A673 (cell line): ENCODE measurements at regions of chr4 and their contacts with region 1.

Region 1: GRCh38 chr4:4328840-4329239 is 38.8 kb downstream of the ZBTB49 start:
- DNase-seq: no peak
- H3K4me3 ChIP-seq: no peak overlapping the region
- H3K27ac ChIP-seq: no peak overlapping the region
- H3K4me1 ChIP-seq: no peaks in the 10 kb centered on the region
- H3K27me3 ChIP-seq: no peaks in the 10 kb centered on the region
- CTCF ChIP-seq: no peak

Region 2: GRCh38 chr4:4541661-4542570 is 213.1 kb after region 1 on chr4 and contains the start of gene STX18:
- CTCF ChIA-PET with region 1: no interaction called
- POLR2A ChIA-PET with region 1: interaction called, 23 read pairs
- intact Hi-C with region 1: no loop called
- DNase-seq: peak; percentile 87
- H3K4me3 ChIP-seq: peak within 1 kb of the TSS; percentile 77
- H3K27ac ChIP-seq: peak within 1 kb of the TSS; percentile 67
- H3K4me1 ChIP-seq: peaks cover 26% of the 10 kb centered on the region
- H3K27me3 ChIP-seq: no peaks in the 10 kb centered on the region
- CTCF ChIP-seq: no peak
- total RNA-seq, gene STX18: 31.0 and 34.3 TPM in 2 replicates